ENCODE measurements at regions of chr4 and their contacts with region 1.

Region 1: GRCh38 chr4:54999003-54999402 is 126.4 kb downstream of the KDR start:
- DNase-seq: peak; percentile 4
- ATAC-seq: peak; percentile 46; the same call in 1 of the 2 replicates
- H3K4me3 ChIP-seq: no peak overlapping the region
- H3K27ac ChIP-seq: no peak overlapping the region
- H3K4me1 ChIP-seq: no peaks in the 10 kb centered on the region
- H3K27me3 ChIP-seq: peaks cover 2% of the 10 kb centered on the region; the same call in 1 of the 2 replicates
- CTCF ChIP-seq: peak; percentile 20; the same call in 1 of the 2 replicates
- POLR2A ChIP-seq: no peak
- RAD21 ChIP-seq: peak; percentile 28; the same call in 1 of the 2 replicates

Region 2: DNA sequence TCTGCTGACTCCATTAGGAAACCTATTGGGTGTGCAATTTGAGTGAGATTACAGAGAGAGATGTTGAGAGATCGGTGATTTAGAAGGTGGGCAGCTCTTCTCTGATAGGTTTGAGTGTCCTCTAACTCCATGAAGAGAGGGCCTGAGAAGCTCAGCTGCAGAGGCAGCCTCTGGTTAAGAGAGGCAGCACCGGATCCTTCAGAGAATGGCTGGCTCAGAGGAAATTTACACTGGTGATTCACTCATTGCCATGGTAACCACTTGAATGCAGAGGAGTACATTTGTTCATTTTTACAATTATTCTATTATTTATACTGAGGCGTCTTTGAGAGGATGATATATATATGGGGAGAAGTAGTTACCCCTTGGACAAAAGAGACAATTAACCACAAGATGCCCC is 598.2 kb before region 1 on chr4:
- CTCF ChIA-PET with region 1: no interaction called
- POLR2A ChIA-PET with region 1: no interaction called
- dilution Hi-C with region 1: no loop called
- in situ Hi-C with region 1: no loop called
- intact Hi-C with region 1: no loop called
- DNase-seq: peak; percentile 80
- ATAC-seq: peak; percentile 90
- H3K4me3 ChIP-seq: no peak overlapping the region
- H3K27ac ChIP-seq: no peak overlapping the region
- H3K4me1 ChIP-seq: peaks cover 5% of the 10 kb centered on the region; the same call in 1 of the 2 replicates
- H3K27me3 ChIP-seq: peaks cover 4% of the 10 kb centered on the region; the same call in 1 of the 2 replicates
- CTCF ChIP-seq: no peak
- POLR2A ChIP-seq: no peak
- RAD21 ChIP-seq: no peak

Region 3: GRCh38 chr4:55184600-55185523 is 185.9 kb after region 1 on chr4:
- CTCF ChIA-PET with region 1: no interaction called
- POLR2A ChIA-PET with region 1: interaction called, 12 read pairs
- dilution Hi-C with region 1: no loop called
- in situ Hi-C with region 1: no loop called
- intact Hi-C with region 1: no loop called
- DNase-seq: peak; percentile 66
- ATAC-seq: peak; percentile 31
- H3K4me3 ChIP-seq: no peak overlapping the region
- H3K27ac ChIP-seq: peak overlapping the region; percentile 72
- H3K4me1 ChIP-seq: peaks cover 6% of the 10 kb centered on the region
- H3K27me3 ChIP-seq: no peaks in the 10 kb centered on the region
- CTCF ChIP-seq: no peak
- POLR2A ChIP-seq: no peak
- RAD21 ChIP-seq: no peak